Activated CD8-positive, alpha-beta memory T cell treated with anti-CD3 and anti-CD28 coated beads, Interleukin-2, amount 10 ng/mL, durations not matched to agents 7 days and 5 days (primary cell): ENCODE measurements at regions of chr10 and their contacts with region 1.

Region 1: DNA sequence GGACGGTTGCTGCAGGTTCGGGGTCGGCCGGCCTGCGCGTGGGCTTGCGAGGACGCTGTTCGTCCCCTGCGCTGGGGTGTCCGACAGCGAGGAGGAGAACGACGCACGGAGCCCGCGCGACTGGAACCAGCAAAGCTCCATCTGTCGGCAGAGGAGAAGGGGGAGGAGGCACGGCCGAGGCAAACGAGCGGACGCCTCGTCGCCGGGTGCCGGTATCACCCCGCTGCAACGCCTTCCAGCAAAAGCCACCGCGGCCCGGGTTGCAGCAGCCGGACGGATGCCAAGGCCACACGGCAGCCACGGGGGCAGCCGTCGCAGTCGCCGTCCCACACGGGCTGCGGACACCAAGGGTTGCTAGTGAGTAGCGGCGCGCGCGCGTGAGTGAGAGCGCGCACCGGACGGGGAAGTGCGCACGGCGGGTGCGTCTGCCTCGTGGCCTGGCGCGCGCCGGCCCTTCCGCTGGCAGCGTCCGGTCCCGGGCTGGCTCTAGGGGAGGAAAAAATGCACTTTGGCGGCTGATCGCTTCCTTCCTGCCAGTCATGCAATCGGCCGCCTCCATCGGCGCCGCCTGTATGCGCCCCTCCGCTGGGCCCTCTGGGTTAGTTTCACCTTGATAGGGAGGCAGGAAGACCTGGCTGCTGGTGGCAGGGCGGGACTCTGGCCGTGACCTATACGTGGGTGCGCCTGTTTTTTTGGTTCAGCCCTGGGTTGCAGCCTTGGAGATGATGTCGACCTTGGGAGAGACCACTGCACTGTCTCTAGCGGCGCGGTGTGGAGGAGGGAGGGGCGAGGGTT is 434 bp downstream of the STAMBPL1 start:
- DNase-seq: peak; percentile 92
- ATAC-seq: peak; percentile 79
- H3K4me3 Mint-ChIP-seq: peak overlapping the region; percentile 99
- H3K27ac Mint-ChIP-seq: peak overlapping the region; percentile 99
- H3K4me1 Mint-ChIP-seq: peaks cover 57% of the 10 kb centered on the region
- H3K27me3 Mint-ChIP-seq: no peaks in the 10 kb centered on the region

Region 2: DNA sequence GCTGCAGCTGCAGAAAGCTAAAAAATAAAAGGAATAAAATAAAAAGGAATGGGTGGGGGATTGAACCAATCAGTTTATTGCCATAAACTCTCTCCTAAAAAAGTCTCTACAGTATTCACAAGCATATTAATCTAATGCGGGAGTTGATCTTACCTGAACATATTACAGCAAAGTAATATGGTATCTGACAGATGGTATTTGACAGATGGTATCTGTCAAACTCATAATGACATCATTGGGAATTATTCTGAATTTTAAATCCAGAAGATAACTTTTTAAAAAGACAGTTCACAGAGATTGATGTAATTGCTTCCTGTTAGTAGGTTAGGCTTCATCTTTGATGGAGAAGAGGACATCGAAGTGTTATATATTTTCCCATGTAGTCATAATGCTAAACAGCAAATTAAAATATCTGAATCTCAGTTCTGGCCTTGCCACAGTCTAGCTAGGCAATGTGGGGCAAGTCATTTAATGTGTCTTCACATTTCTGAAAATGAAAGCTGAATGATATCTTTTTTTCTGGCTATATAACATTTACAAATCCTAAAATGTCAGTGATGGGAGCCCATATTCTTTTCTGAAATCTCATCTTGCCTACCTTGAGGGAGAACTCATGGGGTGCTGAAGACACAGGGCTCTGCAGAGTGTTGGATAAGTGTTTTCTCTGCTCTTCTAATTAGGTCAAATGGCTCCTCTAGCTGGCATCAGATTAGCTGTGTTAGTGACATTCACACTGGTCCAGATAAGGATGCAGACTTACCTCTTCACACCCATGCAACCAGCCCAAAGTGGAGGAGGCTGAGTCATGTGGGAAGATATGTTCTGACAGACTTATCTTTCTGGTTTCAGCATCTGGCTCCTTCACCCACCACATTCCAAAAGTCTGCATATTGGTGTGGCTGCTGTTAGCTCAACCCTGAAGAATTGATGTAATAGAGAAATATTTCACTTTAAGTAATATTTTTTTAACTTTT is 80.0 kb before region 1 on chr10:
- CTCF ChIA-PET with region 1: no interaction called
- DNase-seq: peak; percentile 47
- ATAC-seq: peak; percentile 65
- H3K4me3 Mint-ChIP-seq: no peak overlapping the region
- H3K27ac Mint-ChIP-seq: no peak overlapping the region
- H3K4me1 Mint-ChIP-seq: peaks cover 9% of the 10 kb centered on the region
- H3K27me3 Mint-ChIP-seq: peaks cover 16% of the 10 kb centered on the region

Region 3: GRCh38 chr10:88901206-88901983 is 20.9 kb after region 1 on chr10:
- CTCF ChIA-PET with region 1: interaction called, 17 read pairs
- DNase-seq: no peak
- ATAC-seq: peak; percentile 73
- H3K4me3 Mint-ChIP-seq: no peak overlapping the region
- H3K27ac Mint-ChIP-seq: peak overlapping the region; percentile 61
- H3K4me1 Mint-ChIP-seq: peaks cover 47% of the 10 kb centered on the region
- H3K27me3 Mint-ChIP-seq: no peaks in the 10 kb centered on the region

Region 4: DNA sequence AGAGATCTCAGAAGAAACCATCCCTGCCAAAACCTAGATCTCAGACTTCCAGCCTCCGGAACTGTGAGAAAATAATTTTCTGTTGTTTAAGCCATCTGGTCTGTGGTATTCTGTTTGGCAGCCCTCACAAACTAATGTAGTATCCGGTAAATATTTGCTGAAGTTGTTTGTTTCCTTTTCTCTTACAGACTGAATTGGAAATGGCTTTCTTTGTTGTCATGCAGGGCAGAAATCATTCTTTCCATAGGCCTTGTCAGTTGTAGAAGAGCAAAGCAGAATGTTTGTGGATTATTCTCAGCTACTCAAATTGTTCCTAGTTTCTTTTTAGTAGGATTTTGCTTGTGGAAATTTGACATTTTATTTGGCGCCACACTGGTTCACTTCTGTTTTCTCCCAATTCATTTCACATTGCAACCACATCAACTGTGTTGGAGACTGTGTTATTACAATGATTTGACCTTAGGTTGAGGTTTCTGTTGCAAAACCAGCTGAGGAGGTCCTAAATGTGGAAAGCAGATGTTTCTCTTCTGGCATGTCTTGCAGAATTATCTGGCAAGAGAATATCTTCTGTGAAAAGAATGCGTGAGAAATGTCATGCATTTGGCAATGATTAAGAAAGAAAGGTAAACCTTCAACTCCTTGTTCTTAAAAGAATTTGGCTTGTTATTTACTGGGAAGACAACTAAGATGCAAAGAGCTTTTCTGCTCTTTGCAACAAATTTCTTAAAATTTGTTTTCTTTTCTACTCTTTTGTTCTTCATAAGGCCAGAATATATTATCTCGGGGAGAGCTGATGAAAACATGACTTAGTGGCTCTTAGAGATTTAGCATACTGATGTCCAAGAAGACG is 46.3 kb after region 1 on chr10:
- CTCF ChIA-PET with region 1: no interaction called
- DNase-seq: no peak
- ATAC-seq: no peak
- H3K4me3 Mint-ChIP-seq: no peak overlapping the region
- H3K27ac Mint-ChIP-seq: no peak overlapping the region
- H3K4me1 Mint-ChIP-seq: peaks cover 3% of the 10 kb centered on the region
- H3K27me3 Mint-ChIP-seq: no peaks in the 10 kb centered on the region

Region 5: GRCh38 chr10:88990384-88991160 is 110.1 kb after region 1 on chr10 and contains the start of gene FAS:
- CTCF ChIA-PET with region 1: interaction called, 10 read pairs
- DNase-seq: peak; percentile 90
- ATAC-seq: peak; percentile 71
- H3K4me3 Mint-ChIP-seq: peak within 1 kb of the TSS; percentile 94
- H3K27ac Mint-ChIP-seq: peak within 1 kb of the TSS; percentile 98
- H3K4me1 Mint-ChIP-seq: peaks cover 64% of the 10 kb centered on the region
- H3K27me3 Mint-ChIP-seq: no peaks in the 10 kb centered on the region
- total RNA-seq, gene FAS: 73.7 to 75.4 TPM